Activated CD4-positive, alpha-beta T cell treated with anti-CD3 and anti-CD28 coated beads, Interleukin-2, amount 10 ng/mL, durations not matched to agents 24 days and 14 days (primary cell): ENCODE measurements at regions of chr3 and their contacts with region 1.

Region 1: DNA sequence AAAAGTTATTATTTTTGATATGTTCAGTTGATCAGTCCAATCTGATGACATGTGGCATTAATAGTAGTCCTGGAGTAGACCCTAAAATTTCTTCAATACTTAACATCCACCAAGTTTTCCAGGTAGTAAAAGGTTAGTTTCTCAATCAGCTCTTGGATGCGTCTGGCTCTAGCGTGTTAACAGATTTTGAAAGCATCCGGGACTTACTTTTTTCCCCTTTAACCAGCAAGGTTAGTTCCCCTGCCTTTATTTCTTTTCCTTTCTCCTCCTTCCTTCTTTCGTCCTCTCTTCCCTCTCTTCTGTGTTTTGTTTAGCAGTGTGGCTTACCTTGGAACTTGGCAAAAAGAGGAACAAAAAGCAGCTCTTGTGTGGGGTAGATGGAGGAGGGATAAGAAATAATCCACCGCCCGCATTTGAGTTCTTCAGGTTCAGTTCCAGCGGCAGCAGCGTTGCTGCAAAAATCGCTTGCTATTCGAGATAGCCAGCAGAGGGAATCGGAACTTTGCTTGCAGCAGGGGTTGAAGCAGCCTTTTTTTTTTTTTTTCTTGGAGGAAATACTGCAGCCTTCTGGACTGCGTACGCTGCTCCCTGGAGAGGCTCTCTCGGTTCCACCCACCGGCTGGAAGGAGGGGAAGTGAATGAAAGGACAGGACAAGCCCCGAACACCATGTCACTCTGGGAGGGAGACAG is at the start of gene RBMS3:
- DNase-seq: peak; percentile 74
- H3K4me3 Mint-ChIP-seq: peak within 1 kb of the TSS; percentile 85
- H3K27ac Mint-ChIP-seq: peak within 1 kb of the TSS; percentile 78
- H3K4me1 Mint-ChIP-seq: peaks cover 30% of the 10 kb centered on the region
- H3K27me3 Mint-ChIP-seq: peaks cover 5% of the 10 kb centered on the region
- total RNA-seq, gene RBMS3: 4.3 and 5.0 TPM in 2 replicates

Region 2: GRCh38 chr3:28840976-28841376 is 439.6 kb before region 1 on chr3:
- intact Hi-C with region 1: loop called (anchors 5 kb)
- DNase-seq: peak; percentile 61
- H3K4me3 Mint-ChIP-seq: peak overlapping the region; percentile 24
- H3K27ac Mint-ChIP-seq: peak overlapping the region; percentile 76
- H3K4me1 Mint-ChIP-seq: peaks cover 19% of the 10 kb centered on the region
- H3K27me3 Mint-ChIP-seq: no peaks in the 10 kb centered on the region

Region 3: GRCh38 chr3:28940530-28940929 is 340.0 kb before region 1 on chr3:
- intact Hi-C with region 1: loop called (anchors 2 kb)
- DNase-seq: peak; percentile 64
- H3K4me3 Mint-ChIP-seq: peak overlapping the region; percentile 72
- H3K27ac Mint-ChIP-seq: peak overlapping the region; percentile 77
- H3K4me1 Mint-ChIP-seq: peaks cover 32% of the 10 kb centered on the region
- H3K27me3 Mint-ChIP-seq: no peaks in the 10 kb centered on the region

Region 4: DNA sequence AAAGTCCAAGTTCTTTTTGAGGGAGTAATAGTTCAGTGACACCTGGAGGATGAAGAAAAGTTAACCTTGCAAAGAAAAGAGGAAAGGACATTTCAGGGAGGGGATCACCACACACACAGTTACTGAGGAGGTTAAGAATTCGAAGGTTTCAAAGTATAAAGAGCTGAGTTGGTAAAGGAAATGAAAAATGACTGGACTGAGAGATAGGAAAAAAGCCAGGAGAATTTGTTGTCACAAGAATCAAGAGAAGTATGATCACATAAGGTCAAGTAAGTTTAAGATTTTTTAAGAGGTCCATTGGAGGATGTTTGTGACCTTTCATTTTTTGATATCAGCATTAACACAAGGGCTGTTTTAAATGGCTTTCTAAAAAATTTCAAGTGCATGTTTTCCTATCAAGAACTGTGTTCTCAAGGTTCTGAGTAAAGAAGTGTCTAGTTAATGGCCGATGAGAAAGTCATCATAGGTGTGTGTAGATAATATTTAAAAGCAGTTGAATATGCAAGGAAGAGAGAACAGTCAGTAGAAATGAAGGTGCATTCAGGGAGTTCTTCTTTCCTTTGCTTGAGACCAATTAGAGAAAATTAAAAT is 188.9 kb before region 1 on chr3:
- intact Hi-C with region 1: loop called (anchors 5 kb)
- DNase-seq: no peak
- H3K4me3 Mint-ChIP-seq: no peak overlapping the region
- H3K27ac Mint-ChIP-seq: peak overlapping the region; percentile 52
- H3K4me1 Mint-ChIP-seq: peaks cover 2% of the 10 kb centered on the region
- H3K27me3 Mint-ChIP-seq: no peaks in the 10 kb centered on the region

Region 5: DNA sequence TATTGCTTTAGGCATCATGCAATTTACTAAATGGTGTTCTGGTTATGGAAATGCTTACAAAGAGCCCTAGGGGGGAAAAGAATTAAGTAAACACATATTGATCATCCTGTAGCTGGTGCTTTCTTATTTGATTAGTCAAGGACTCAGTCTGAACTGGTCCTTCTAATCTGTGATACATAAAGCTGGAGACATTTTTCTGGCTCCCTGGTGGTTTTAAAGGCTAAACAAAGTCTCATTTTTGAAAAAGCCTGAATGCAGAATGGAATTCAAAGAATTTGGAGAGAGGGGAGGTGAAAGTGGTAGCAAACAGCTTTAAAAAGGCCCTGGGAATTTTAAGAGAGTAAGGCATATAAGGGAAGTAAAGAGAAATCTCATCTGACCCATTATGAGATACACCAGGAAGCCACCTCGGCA is 150.0 kb after region 1 on chr3:
- intact Hi-C with region 1: no loop called
- DNase-seq: no peak
- H3K4me3 Mint-ChIP-seq: no peak overlapping the region
- H3K27ac Mint-ChIP-seq: no peak overlapping the region
- H3K4me1 Mint-ChIP-seq: no peaks in the 10 kb centered on the region
- H3K27me3 Mint-ChIP-seq: no peaks in the 10 kb centered on the region

Region 6: DNA sequence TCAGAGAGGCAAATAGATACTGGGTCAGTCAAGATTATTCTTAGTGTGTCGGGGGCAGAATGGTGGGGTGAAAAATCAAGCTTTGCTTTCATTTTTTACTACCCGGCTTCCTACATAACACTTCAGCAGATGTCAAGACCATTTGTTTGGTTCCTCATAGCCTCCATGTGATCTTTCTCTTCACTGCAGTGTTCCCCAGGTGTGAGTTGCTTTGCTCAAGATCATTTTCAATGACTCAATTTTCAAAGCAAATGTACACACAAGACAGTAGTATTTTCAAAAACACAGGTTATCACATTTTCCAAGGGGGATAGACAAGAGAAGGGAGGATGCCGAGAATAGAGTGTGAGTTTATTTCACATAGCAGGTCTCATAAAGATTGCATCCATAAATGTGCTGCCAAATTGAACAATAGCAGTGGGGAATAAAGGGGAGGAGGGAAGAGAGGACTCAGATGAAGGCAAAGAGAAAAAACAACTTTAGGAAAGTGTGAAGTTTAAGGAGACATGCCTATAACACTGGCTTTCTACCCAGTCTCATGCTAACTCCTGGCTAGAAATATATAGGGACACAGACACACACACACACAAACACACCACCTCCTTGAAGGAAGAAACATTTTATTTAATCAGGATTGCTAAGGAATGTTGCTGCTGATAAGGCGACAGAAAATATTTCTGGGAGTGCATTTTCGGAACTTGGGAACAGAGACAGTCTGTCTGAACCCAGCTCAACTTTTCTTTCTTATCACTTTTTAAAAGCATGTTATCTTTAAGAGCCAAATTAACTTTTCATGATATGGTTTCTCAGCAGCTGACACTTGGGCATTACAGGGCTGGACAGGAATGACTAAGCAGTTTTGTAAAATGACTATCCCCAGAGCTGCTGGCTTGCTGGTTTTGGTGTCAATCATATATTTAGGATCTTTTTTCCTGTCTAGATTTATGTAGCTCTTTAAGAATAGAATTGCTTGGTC is 402.8 kb after region 1 on chr3:
- intact Hi-C with region 1: loop called (anchors 2 kb)
- DNase-seq: no peak
- H3K4me3 Mint-ChIP-seq: no peak overlapping the region
- H3K27ac Mint-ChIP-seq: no peak overlapping the region
- H3K4me1 Mint-ChIP-seq: peaks cover 9% of the 10 kb centered on the region
- H3K27me3 Mint-ChIP-seq: peaks cover 6% of the 10 kb centered on the region